SK-N-SH (cell line): ENCODE measurements at regions of chr7 and their contacts with region 1.

Region 1: DNA sequence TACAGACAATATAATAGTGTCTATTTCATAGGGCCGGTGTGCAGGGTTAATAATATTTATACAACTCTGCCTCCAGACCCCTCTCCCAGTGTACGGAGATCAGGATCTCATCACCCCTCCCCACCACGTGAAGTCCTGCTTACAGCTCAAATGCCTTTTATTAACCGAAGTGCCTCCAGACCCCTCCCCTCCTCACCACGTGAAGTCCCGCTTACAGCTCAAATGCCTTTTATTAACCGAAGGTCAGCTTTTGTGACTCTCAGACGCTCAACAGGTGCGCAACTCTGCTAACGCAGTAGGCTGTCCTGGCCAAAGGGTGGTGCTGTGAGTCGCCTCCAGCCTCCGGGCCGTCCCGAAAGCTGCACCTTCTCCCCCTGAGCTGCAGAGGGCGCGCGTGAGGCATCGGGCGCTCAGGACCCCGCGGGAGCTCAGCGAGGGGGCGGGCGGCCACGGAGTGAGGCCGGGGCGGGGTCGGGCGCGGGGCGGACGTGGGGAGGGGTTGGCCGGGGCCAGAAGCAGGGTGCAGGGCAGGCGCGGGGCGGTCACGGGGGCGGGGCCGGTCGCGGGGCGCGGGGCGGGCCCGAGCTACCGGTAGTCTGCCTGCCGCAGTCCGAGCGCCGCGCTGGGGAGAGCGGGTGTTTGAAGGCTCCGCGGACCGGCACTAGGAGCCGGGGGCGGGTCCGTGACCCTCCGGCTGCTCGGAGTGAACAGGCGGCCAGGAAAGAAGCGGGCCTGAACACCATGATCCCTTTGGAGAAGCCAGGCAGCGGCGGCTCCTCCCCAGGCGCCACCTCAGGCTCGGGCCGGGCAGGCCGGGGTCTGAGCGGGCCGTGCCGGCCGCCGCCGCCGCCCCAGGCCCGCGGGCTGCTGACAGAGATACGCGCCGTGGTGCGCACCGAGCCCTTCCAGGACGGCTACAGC is at the start of gene STK17A:
- DNase-seq: peak; percentile 99
- H3K4me3 ChIP-seq: peak within 1 kb of the TSS; percentile 70 to 98
- H3K27ac ChIP-seq: peak within 1 kb of the TSS; percentile 83 to 88
- H3K4me1 ChIP-seq: peaks cover 15 to 20% of the 10 kb centered on the region in 2 experiments; a peak in 3 of 4 replicates
- H3K27me3 ChIP-seq: no peaks in the 10 kb centered on the region
- CTCF ChIP-seq: peak; percentile 100
- EP300 ChIP-seq: peak in 1 of 2 experiments; percentile 3; a peak in 1 of 4 replicates
- RAD21 ChIP-seq: peak; percentile 96
- polyA plus RNA-seq, gene STK17A: 47.8 and 52.0 TPM in 2 replicates

Region 2: GRCh38 chr7:42843205-42843800 is 739.5 kb before region 1 on chr7:
- CTCF ChIA-PET with region 1: no interaction called
- POLR2A ChIA-PET with region 1: no interaction called
- DNase-seq: peak; percentile 67
- H3K4me3 ChIP-seq: 0 out of 4 replicates have a peak overlapping the region, but pooled peaks of 1 of the 2 experiments have one; percentile 44
- H3K27ac ChIP-seq: no peak overlapping the region
- H3K4me1 ChIP-seq: no peaks in the 10 kb centered on the region
- H3K27me3 ChIP-seq: peaks cover 32% of the 10 kb centered on the region; the same call in 1 of the 2 replicates
- CTCF ChIP-seq: peak; percentile 68
- EP300 ChIP-seq: no peak
- RAD21 ChIP-seq: peak; percentile 83

Region 3: GRCh38 chr7:43501870-43502269 is 80.9 kb before region 1 on chr7:
- CTCF ChIA-PET with region 1: interaction called, 17 read pairs
- POLR2A ChIA-PET with region 1: no interaction called
- DNase-seq: no peak
- H3K4me3 ChIP-seq: no peak overlapping the region
- H3K27ac ChIP-seq: no peak overlapping the region
- H3K4me1 ChIP-seq: no peaks in the 10 kb centered on the region
- H3K27me3 ChIP-seq: peaks cover 50% of the 10 kb centered on the region
- CTCF ChIP-seq: no peak
- EP300 ChIP-seq: no peak
- RAD21 ChIP-seq: no peak

Region 4: DNA sequence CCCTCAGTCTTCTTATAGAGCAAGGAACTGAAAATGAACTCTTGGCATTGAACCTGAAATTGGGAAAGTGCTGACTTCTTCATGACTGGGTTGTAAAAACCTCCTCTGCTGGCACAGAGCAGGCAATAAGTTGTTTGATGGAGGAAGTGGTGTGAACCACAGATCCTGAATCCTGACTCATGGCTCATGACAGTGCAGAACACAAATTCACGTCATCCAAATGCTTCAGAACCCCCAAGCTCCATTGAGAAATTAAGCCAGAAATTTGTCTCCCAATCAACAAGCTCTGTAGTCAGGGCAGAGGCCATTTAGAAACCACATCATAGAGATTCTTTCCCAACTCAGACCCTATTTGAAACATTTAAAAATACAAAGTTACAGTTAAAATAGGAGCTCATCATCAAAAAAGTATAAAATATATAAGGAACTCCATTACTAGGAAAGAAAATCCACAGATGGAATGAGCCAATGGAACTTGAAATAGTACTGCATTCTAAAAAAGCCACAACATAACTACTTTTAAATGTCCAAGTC is 10.2 kb before region 1 on chr7:
- CTCF ChIA-PET with region 1: interaction called, 133 read pairs
- POLR2A ChIA-PET with region 1: interaction called, 4 read pairs
- DNase-seq: no peak
- H3K4me3 ChIP-seq: no peak overlapping the region
- H3K27ac ChIP-seq: peak overlapping the region in 1 of 2 experiments; percentile 85; a peak in 2 of 4 replicates
- H3K4me1 ChIP-seq: peaks cover 0 to 3% of the 10 kb centered on the region in 2 experiments; a peak in 1 of 4 replicates
- H3K27me3 ChIP-seq: no peaks in the 10 kb centered on the region
- CTCF ChIP-seq: no peak
- EP300 ChIP-seq: peak in 1 of 2 experiments; percentile 76; a peak in 1 of 4 replicates
- RAD21 ChIP-seq: no peak

Region 5: DNA sequence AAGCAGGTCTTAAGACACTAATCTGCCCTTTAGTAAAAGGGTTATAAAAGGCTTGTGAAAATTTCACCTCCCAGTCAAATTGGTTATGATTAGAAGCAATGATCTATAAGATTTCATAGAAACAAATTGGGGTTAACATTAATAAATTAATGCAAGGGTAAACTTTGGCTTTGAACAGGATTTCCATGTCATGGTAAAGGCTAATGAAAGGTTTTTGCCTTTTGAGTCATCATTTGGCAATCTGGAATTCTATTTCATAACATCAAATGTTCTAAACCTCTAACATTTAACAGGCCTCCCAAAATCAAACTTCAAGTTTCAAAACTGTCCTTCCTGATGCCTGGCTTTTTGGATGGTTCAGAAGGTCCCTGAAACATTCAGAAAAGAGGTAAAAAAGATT is 84.2 kb after region 1 on chr7:
- CTCF ChIA-PET with region 1: interaction called, 20 read pairs
- POLR2A ChIA-PET with region 1: no interaction called
- DNase-seq: no peak
- H3K4me3 ChIP-seq: no peak overlapping the region
- H3K27ac ChIP-seq: peak overlapping the region; percentile 67 to 86; a peak in 2 of 4 replicates
- H3K4me1 ChIP-seq: peaks cover 6 to 8% of the 10 kb centered on the region in 2 experiments; a peak in 3 of 4 replicates
- H3K27me3 ChIP-seq: no peaks in the 10 kb centered on the region
- CTCF ChIP-seq: no peak
- EP300 ChIP-seq: peak; percentile 63 to 72
- RAD21 ChIP-seq: no peak

Region 6: GRCh38 chr7:43729214-43729923 is 146.6 kb after region 1 on chr7 and contains the start of gene COA1:
- CTCF ChIA-PET with region 1: interaction called, 144 read pairs
- POLR2A ChIA-PET with region 1: interaction called, 18 read pairs
- DNase-seq: peak; percentile 95
- H3K4me3 ChIP-seq: peak within 1 kb of the TSS; percentile 93 to 97
- H3K27ac ChIP-seq: peak within 1 kb of the TSS; percentile 68 to 95
- H3K4me1 ChIP-seq: peaks cover 0 to 7% of the 10 kb centered on the region in 2 experiments; a peak in 1 of 4 replicates
- H3K27me3 ChIP-seq: no peaks in the 10 kb centered on the region
- CTCF ChIP-seq: peak; percentile 19; the same call in 1 of the 2 replicates
- EP300 ChIP-seq: no peak; a peak in 1 of 4 replicates
- RAD21 ChIP-seq: no peak
- polyA plus RNA-seq, gene COA1: 42.8 and 66.3 TPM in 2 replicates

Region 7: GRCh38 chr7:43850348-43851116 is 267.8 kb after region 1 on chr7:
- CTCF ChIA-PET with region 1: interaction called, 10 read pairs
- POLR2A ChIA-PET with region 1: no interaction called
- DNase-seq: no peak
- H3K4me3 ChIP-seq: no peak overlapping the region
- H3K27ac ChIP-seq: no peak overlapping the region
- H3K4me1 ChIP-seq: peaks cover 0 to 6% of the 10 kb centered on the region in 2 experiments; a peak in 1 of 4 replicates
- H3K27me3 ChIP-seq: 0 out of 2 replicates have a peak, but pooled peaks cover 5% of the 10 kb centered on the region
- CTCF ChIP-seq: no peak
- EP300 ChIP-seq: no peak
- RAD21 ChIP-seq: no peak